ENCODE measurements at regions of chr12 and their contacts with region 1.

Region 1: GRCh38 chr12:54439521-54440255 is 20.6 kb upstream of the ITGA5 start:
- DNase-seq: no peak
- ATAC-seq: peak; percentile 83
- H3K4me3 ChIP-seq: no peak overlapping the region
- H3K4me1 ChIP-seq: peaks cover 3% of the 10 kb centered on the region
- CTCF ChIP-seq: peak; percentile 43

Region 2: GRCh38 chr12:54398995-54399793 is 40.5 kb before region 1 on chr12:
- intact Hi-C with region 1: loop called (anchors 5 kb)
- DNase-seq: peak; percentile 75 to 92 (median 90)
- ATAC-seq: peak; percentile 90
- H3K4me3 ChIP-seq: no peak overlapping the region
- H3K4me1 ChIP-seq: no peaks in the 10 kb centered on the region
- CTCF ChIP-seq: peak; percentile 95

Region 3: GRCh38 chr12:54404061-54405004 is 35.4 kb before region 1 on chr12:
- intact Hi-C with region 1: loop called (anchors 5 kb)
- DNase-seq: peak in 1 of 3 donors; percentile 78
- ATAC-seq: peak; percentile 58
- H3K4me3 ChIP-seq: no peak overlapping the region
- H3K4me1 ChIP-seq: no peaks in the 10 kb centered on the region
- CTCF ChIP-seq: peak; percentile 89

Measured in mucosa of descending colon (tissue), 3 donors.